Endothelial cell of umbilical vein (primary cell): ENCODE measurements at regions of chr1 and their contacts with region 1.

Region 1: DNA sequence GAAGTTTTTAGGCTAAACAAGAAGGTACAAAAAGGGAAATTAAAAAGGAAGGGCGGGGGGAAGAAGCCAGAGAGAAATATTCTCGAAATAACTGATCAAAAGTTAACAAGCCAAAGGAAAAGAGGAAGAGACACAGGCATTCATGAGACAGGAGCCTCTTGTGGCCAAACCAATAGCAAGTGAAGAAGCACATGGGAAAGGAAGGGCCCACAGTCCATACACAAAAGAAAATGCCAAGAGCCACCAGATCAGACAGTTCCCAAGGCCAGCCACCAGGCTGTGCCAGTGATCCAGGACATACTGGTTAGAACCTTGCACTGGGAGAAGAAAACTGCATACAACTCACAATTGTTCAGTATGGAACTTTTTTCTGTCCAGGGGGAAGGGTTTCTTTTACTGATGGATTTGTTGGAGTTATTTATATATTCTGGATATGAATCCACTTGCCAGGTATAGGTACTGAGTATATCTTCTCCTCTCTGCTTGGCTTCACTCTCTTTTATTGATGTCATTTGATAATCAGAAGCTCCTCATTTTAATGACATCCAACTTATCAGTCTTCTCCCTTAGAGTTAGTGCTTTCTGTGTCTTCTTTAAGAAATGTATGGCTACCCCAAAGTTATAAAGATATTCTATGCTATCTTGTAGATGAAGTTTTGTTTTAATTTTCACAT is 76.8 kb downstream of the CD46 start:
- DNase-seq: peak; percentile 96
- H3K4me3 ChIP-seq: no peak overlapping the region
- H3K27ac ChIP-seq: peak overlapping the region; percentile 14
- H3K4me1 ChIP-seq: peaks cover 45% of the 10 kb centered on the region
- H3K27me3 ChIP-seq: no peaks in the 10 kb centered on the region
- CTCF ChIP-seq: peak; percentile 82 to 94
- POLR2A ChIP-seq: peak; percentile 23

Region 2: GRCh38 chr1:207672522-207673130 is 156.0 kb before region 1 on chr1:
- CTCF ChIA-PET with region 1: no interaction called
- POLR2A ChIA-PET with region 1: no interaction called
- dilution Hi-C with region 1: no loop called
- intact Hi-C with region 1: no loop called
- DNase-seq: peak; percentile 51
- H3K4me3 ChIP-seq: no peak overlapping the region
- H3K27ac ChIP-seq: no peak overlapping the region
- H3K4me1 ChIP-seq: no peaks in the 10 kb centered on the region
- H3K27me3 ChIP-seq: peaks cover 30 to 38% of the 10 kb centered on the region in 2 experiments
- CTCF ChIP-seq: peak; percentile 20 to 41
- POLR2A ChIP-seq: no peak

Region 3: GRCh38 chr1:207805841-207806421 is 22.7 kb before region 1 on chr1:
- CTCF ChIA-PET with region 1: interaction called, 13 read pairs
- POLR2A ChIA-PET with region 1: interaction called, 3 read pairs
- dilution Hi-C with region 1: no loop called
- intact Hi-C with region 1: no loop called
- DNase-seq: peak; percentile 87
- H3K4me3 ChIP-seq: no peak overlapping the region
- H3K27ac ChIP-seq: peak overlapping the region; percentile 83
- H3K4me1 ChIP-seq: peaks cover 23% of the 10 kb centered on the region
- H3K27me3 ChIP-seq: no peaks in the 10 kb centered on the region
- CTCF ChIP-seq: no peak
- POLR2A ChIP-seq: no peak

Region 4: DNA sequence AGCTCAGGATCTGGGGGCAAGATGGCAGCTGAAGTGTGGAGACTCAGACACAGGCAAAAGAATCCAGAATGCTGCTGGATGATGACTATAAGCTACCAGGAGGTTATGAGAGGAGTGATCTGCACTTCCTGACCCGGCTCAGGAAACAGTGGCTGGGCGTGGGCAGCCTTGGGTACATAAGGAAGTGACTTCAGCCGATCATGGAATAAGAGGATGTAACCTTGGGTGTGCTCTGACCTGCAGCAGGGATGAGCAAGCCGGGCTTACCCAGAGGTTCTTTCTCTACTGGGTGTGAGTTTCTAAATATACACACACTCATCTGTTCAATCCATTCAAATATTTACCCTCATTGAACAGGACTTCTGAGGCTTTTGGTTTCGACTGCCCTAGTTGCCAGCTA is 19.6 kb after region 1 on chr1:
- CTCF ChIA-PET with region 1: interaction called, 21 read pairs
- POLR2A ChIA-PET with region 1: no interaction called
- dilution Hi-C with region 1: no loop called
- intact Hi-C with region 1: loop called (anchors 1 kb)
- DNase-seq: peak; percentile 90
- H3K4me3 ChIP-seq: peak overlapping the region in 1 of 3 experiments; percentile 6
- H3K27ac ChIP-seq: peak overlapping the region; percentile 90
- H3K4me1 ChIP-seq: peaks cover 40% of the 10 kb centered on the region
- H3K27me3 ChIP-seq: no peaks in the 10 kb centered on the region
- CTCF ChIP-seq: no peak
- POLR2A ChIP-seq: peak; percentile 78

Region 5: DNA sequence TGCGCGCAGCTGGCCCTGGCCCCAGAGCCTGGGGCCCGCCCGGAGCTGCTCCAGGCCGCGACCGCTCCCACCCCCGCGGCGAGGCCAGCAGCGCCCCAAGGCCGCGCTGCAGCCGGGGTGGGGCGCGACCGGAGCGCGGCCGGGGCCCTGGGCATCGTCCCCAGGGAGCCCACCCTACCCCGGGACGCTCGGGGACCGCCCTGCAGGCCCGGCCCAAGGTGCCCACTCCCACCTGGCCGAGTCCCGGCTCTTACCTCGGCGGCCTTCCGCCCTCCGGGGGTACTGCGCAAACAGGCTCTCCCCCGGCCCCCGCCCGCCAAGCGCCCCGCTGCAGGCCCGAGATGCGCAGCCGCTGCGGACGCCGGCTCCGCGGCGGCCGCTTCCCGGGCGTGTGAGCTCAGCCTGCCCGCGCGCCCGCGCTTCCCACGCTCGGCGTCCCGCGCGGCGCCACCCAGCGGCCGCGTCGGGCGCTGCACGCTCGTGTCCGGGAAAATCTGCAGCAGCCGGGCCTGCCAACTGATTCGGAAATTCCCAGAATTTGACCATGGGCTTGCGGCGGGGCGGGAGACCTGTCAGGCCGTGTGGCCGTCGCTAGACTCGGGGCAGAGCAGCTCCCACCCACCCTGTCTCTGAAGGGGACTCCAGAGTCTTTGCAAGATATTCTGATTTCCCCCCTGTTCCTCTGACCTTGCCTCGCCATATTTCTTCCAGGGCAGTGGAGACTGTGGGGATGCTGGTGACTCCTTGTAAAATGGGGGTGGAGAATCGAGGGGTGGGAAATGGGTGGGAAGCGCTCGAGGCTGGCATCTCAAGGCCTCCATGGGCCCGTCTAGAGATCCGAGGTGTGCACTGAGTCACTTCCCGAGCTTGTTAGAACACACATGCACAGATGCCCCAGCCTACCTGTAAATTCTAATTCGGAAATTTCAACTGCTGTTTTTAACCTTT is 40.4 kb after region 1 on chr1:
- CTCF ChIA-PET with region 1: interaction called, 634 read pairs
- POLR2A ChIA-PET with region 1: interaction called, 8 read pairs
- dilution Hi-C with region 1: no loop called
- intact Hi-C with region 1: loop called (anchors 1 kb)
- DNase-seq: peak; percentile 83
- H3K4me3 ChIP-seq: peak overlapping the region; percentile 64 to 67 (median 65)
- H3K27ac ChIP-seq: peak overlapping the region; percentile 52
- H3K4me1 ChIP-seq: peaks cover 17% of the 10 kb centered on the region
- H3K27me3 ChIP-seq: no peaks in the 10 kb centered on the region
- CTCF ChIP-seq: peak; percentile 73 to 95
- POLR2A ChIP-seq: peak; percentile 59

Region 6: GRCh38 chr1:207981976-207982375 is 153.4 kb after region 1 on chr1:
- CTCF ChIA-PET with region 1: interaction called, 4 read pairs
- POLR2A ChIA-PET with region 1: no interaction called
- dilution Hi-C with region 1: no loop called
- intact Hi-C with region 1: loop called (anchors 5 kb)
- DNase-seq: peak; percentile 25
- H3K4me3 ChIP-seq: no peak overlapping the region
- H3K27ac ChIP-seq: no peak overlapping the region
- H3K4me1 ChIP-seq: no peaks in the 10 kb centered on the region
- H3K27me3 ChIP-seq: peaks cover 17 to 24% of the 10 kb centered on the region in 2 experiments
- CTCF ChIP-seq: peak; percentile 60 to 68
- POLR2A ChIP-seq: no peak